ENCODE measurements at regions of chr9 and their contacts with region 1.

Region 1: DNA sequence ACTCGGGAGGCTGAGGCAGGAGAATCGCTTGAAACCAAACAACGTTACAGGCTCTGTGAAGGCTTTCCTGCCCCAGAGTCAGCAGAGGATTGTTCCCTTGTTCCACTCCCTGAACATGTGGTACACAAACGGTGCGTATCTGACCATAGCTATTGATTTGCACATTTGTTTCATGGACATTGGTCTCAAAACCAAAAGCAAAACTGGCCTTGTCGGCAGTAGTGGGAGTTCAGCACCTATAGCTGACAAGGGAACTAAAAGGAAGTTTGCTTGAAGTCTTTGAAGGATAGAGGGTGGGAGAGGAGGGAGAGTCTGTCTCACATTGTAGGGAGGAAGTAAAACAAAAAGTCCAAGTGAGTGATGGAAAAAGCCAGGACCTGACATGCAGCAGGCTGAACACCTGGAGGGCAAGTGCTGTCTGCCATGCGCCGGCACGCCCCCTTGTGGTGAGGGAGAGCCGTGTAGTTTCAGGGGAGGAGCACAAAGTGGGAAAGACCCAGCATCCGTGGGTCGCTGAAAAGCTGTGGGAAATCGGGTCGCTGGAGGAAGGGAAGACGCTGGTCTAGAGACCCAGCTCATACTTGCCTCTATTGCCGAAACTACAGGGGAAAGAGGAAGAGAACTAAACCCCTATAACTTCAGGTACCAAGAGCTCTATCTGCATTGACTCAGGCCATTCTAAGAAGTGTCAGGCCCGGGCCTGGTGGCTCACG is 58.0 kb downstream of the RAD23B start:
- DNase-seq: peak; percentile 48
- H3K4me3 ChIP-seq: no peak overlapping the region
- H3K27ac ChIP-seq: no peak overlapping the region
- H3K4me1 ChIP-seq: no peaks in the 10 kb centered on the region
- H3K27me3 ChIP-seq: no peaks in the 10 kb centered on the region
- CTCF ChIP-seq: peak; percentile 81 to 86
- POLR2A ChIP-seq: no peak

Region 2: DNA sequence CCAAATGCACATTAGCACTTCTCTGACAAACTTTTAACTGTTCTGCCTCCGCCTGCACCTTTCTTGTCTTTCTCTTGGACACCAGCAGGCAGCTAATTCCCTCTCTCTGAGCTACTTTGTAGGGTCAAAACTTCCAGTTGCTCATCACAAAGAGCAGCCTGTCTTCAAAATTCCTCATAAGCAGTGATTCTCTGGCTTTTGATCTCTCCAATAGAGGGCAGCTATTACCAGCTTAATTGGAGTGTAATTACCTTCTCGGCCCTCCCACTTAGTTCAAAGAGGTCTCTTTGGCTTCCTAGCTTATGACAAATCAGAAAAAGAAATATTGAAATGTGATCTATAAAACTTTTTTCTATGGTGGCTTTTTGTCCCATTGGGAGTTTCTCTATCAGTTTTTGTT is 101.6 kb before region 1 on chr9:
- CTCF ChIA-PET with region 1: interaction called, 21 read pairs
- POLR2A ChIA-PET with region 1: no interaction called
- dilution Hi-C with region 1: no loop called
- intact Hi-C with region 1: loop called (anchors 1 kb)
- DNase-seq: peak; percentile 31
- H3K4me3 ChIP-seq: no peak overlapping the region
- H3K27ac ChIP-seq: no peak overlapping the region
- H3K4me1 ChIP-seq: no peaks in the 10 kb centered on the region
- H3K27me3 ChIP-seq: no peaks in the 10 kb centered on the region
- CTCF ChIP-seq: no peak
- POLR2A ChIP-seq: no peak

Region 3: DNA sequence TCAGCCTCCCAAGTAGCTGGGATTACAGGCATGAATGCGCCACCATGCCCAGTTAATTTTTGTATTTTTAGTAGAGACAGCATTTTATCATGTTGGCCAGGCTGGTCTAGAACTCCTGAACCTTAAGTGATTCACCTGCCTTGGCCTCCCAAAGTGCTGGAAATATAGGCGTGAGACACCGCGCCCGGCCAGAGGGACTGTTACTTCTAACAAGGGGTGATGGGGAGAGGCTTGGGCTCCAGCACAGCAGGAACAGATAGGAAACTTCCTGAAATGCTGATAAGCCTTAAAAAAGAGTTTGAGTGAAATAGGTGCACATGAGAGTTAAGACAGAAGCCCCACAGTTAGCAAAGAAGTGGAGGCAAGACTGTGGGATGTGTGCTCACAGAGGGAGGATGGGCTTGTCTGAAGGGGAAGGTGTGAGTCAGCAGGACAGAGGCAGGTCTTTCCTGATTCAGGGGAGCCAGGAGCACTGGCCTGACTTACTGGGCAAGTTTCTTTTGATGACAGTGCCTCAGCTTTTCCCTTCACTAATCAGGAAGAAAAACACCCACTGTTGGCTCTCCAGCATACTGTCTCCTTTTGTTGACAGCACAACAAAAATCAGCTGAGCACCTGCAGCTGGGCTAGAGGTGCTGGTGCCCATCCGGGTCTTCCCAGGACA is 10.4 kb after region 1 on chr9:
- CTCF ChIA-PET with region 1: interaction called, 10 read pairs
- POLR2A ChIA-PET with region 1: no interaction called
- dilution Hi-C with region 1: no loop called
- intact Hi-C with region 1: no loop called
- DNase-seq: no peak
- H3K4me3 ChIP-seq: no peak overlapping the region
- H3K27ac ChIP-seq: no peak overlapping the region
- H3K4me1 ChIP-seq: no peaks in the 10 kb centered on the region
- H3K27me3 ChIP-seq: peaks cover 0 to 4% of the 10 kb centered on the region in 2 experiments
- CTCF ChIP-seq: no peak
- POLR2A ChIP-seq: no peak

Measured in endothelial cell of umbilical vein (primary cell).